Heart left ventricle (tissue), 16 donors: ENCODE measurements at regions of chr12 and their contacts with region 1.

Region 1: GRCh38 chr12:29552324-29552927 is 54.9 kb upstream of the OVCH1 start:
- DNase-seq: peak; percentile 53 to 80 (median 75)
- ATAC-seq: peak; percentile 78 to 95 (median 92)
- H3K4me3 ChIP-seq: no peak overlapping the region
- H3K27ac ChIP-seq: peak overlapping the region in 6 of 12 donors; percentile 1 to 54 (median 22)
- H3K4me1 ChIP-seq: peaks cover 0 to 20% (median 8%) of the 10 kb centered on the region in 12 donors
- H3K27me3 ChIP-seq: no peaks in the 10 kb centered on the region
- CTCF ChIP-seq: peak; percentile 85 to 96 (median 91)
- POLR2A ChIP-seq: no peak

Region 2: DNA sequence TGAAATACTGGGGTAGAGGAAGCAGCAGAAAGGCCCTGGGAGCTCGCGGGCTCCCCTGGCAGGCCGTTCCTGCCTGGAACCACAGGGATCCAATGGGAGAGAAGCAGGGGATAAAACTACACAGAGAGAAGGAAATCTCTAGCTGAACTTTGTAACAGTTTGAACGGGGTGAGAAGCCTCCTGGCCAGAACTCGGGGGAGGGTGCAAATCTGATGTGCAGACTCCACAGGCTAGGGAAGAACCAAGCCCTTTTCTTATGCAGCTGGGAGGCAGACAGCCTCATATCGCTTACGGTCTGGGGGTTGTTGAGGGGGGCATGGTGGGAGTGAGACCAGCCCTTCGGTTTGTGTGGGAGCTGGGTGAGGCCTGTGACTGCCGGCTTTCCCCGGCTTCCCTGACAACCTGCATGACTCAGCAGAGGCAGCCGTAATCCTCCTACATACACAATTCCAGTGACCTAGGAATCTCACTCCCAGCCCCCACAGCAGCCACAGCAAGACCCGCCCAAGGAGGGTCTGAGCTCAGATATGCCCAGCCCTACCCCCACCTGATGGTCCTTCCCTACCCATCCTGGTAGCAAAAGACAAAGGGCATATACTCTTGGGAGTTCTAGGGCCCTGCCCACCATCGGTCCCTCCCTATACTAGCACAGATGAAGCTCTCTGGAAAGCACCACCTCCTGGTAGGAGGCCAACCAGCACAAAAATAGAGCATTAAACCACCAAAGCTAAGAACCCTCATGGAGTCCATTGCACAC is 88.3 kb after region 1 on chr12:
- intact Hi-C with region 1: loop called in 3 of 10 experiments (anchors 5 to 10 kb)
- DNase-seq: peak; percentile 45 to 67 (median 63)
- ATAC-seq: peak; percentile 23 to 69 (median 56)
- H3K4me3 ChIP-seq: peak overlapping the region in 3 of 12 donors; percentile 1 to 33 (median 6)
- H3K27ac ChIP-seq: peak overlapping the region in 11 of 12 donors; percentile 47 to 82 (median 69)
- H3K4me1 ChIP-seq: peaks cover 0 to 26% (median 13%) of the 10 kb centered on the region in 12 donors
- H3K27me3 ChIP-seq: no peaks in the 10 kb centered on the region
- CTCF ChIP-seq: peak in 3 of 12 donors; percentile 10 to 42 (median 19)
- POLR2A ChIP-seq: no peak

Region 3: DNA sequence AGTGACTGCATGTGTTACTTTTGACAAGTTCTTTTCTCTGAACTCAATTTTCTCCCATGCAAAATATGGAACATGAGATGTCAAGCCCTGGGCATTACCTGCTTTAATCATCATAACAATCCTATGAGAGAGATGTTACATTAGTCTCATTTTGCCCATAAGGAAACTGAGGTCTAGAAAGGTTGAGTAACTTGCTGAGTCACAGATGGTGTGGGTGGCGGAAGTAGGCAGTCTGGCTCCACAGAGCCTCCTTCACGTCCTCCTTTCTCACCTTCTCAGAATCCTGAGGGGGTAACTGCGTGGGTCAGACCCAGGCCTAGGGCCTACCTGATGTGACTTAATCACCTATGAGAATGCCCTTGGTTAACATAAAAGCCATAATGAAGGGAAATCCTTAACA is 180.6 kb after region 1 on chr12:
- intact Hi-C with region 1: loop called in 1 of 10 experiments (anchors 10 kb)
- DNase-seq: no peak
- ATAC-seq: no peak
- H3K4me3 ChIP-seq: no peak overlapping the region
- H3K27ac ChIP-seq: peak overlapping the region in 9 of 12 donors; percentile 6 to 82 (median 61)
- H3K4me1 ChIP-seq: peaks cover 10 to 96% (median 56%) of the 10 kb centered on the region in 12 donors
- H3K27me3 ChIP-seq: no peaks in the 10 kb centered on the region
- CTCF ChIP-seq: no peak
- POLR2A ChIP-seq: no peak

Region 4: GRCh38 chr12:29889737-29890136 is 337.3 kb after region 1 on chr12:
- intact Hi-C with region 1: loop called in 8 of 10 experiments (anchors 2 to 10 kb)
- DNase-seq: peak in 4 of 5 donors; percentile 52 to 71 (median 58)
- ATAC-seq: peak in 3 of 4 donors; percentile 36 to 57 (median 56)
- H3K4me3 ChIP-seq: no peak overlapping the region
- H3K27ac ChIP-seq: no peak overlapping the region
- H3K4me1 ChIP-seq: no peaks in the 10 kb centered on the region
- H3K27me3 ChIP-seq: no peaks in the 10 kb centered on the region
- CTCF ChIP-seq: peak; percentile 44 to 71 (median 59)
- POLR2A ChIP-seq: no peak